PC-9 (cell line): ENCODE measurements at regions of chr7 and their contacts with region 1.

Region 1: DNA sequence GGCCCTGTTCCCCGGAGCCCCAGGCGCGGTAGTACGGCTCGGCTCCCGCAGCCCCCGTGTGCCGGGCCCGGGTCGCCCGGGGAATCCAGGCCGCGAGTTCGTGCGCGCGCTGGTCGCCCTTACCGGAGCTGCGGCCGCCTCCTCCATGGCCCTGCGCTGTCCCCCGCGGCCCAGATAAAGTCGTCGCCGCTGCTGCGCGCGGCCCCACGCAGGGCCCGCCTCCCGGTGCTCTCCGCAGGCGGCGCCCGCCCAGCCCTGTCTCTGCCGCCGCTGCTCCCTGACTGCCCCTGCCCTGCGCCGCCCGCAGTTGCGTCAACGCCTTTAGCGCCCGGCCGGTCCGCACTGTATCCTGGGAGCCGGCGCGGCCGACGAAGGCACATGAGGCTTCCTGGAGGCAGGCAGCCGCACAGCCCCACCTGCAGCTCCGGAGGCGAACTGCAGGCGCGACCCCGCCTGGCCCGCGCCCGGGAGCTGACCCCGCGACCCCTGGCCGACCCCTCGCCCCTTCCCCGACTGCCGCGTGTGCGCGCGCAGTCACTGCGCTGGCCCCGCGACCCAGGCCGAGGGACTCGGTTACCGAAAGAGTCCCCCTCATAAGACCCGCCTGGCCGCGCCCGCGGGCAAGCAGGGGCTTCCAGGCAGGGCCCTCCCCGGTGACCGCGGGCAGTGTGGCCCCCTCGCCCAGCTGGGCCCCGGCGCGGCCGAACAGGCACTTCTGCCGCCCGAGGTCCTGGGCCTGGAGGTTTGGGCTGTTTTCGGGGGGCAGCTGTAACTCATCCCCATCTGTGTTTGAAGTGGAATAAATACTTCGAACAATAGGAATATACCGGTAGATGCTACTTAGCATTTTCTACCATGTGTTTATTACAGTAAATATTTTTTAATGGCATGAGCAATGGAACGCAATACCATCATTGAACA is 127.1 kb upstream of the ZNF746 start:
- DNase-seq: peak; percentile 85 to 96
- H3K4me3 ChIP-seq: peak overlapping the region; percentile 89
- H3K27ac ChIP-seq: 0 out of 2 replicates have a peak overlapping the region, but pooled peaks have one; percentile 33
- H3K4me1 ChIP-seq: peaks cover 21% of the 10 kb centered on the region
- H3K27me3 ChIP-seq: peaks cover 11% of the 10 kb centered on the region
- CTCF ChIP-seq: peak; percentile 91

Region 2: DNA sequence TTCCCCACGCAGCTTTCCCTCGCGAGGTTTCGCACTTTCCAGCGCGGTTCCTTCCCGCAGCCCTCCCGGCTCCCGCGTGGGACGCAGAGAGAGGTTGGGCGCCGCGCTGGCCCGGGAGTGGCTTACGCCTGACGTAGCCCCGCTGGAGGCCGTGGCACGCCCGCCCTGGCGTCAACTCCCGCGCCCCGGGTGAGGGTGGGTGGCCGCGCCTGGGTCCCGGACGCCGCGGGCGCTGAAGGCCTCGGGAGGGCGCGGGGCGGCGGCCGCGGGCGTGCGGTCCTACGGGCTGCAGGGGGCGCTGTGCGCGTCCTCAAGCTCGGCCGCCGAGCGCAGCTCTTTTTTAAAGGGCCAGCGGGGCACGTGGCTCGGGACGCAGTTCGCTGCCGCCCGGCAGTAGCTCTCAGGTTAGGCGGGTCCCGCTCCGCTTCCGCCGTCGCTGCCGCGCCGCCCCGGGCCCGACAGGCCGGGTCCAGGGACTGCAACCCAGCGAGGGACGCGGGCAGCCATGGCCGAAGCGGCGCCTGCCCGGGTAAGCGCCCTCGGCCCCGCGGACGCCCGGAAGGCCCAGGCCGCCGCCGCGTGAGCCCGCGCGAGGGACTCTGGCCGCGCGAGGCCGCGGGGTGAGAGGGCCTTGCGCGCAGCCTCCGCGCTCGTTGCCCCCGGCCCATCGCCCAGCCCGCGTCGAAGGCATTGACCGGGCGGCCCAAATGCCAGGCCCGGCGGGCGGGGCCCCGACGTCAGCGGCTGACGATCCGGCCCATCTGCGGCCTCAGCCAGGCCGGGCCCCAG is 362.7 kb before region 1 on chr7 and contains the start of gene ZNF783:
- CTCF ChIA-PET with region 1: no interaction called
- POLR2A ChIA-PET with region 1: interaction called, 3 read pairs
- intact Hi-C with region 1: loop called (anchors 1 kb)
- DNase-seq: peak; percentile 74 to 90
- H3K4me3 ChIP-seq: peak within 1 kb of the TSS; percentile 89
- H3K27ac ChIP-seq: peak within 1 kb of the TSS; percentile 74
- H3K4me1 ChIP-seq: peaks cover 16% of the 10 kb centered on the region; the same call in 1 of the 2 replicates
- H3K27me3 ChIP-seq: no peaks in the 10 kb centered on the region
- CTCF ChIP-seq: peak; percentile 68
- total RNA-seq, gene ZNF783: 15.8 and 22.2 TPM in 2 replicates

Region 3: DNA sequence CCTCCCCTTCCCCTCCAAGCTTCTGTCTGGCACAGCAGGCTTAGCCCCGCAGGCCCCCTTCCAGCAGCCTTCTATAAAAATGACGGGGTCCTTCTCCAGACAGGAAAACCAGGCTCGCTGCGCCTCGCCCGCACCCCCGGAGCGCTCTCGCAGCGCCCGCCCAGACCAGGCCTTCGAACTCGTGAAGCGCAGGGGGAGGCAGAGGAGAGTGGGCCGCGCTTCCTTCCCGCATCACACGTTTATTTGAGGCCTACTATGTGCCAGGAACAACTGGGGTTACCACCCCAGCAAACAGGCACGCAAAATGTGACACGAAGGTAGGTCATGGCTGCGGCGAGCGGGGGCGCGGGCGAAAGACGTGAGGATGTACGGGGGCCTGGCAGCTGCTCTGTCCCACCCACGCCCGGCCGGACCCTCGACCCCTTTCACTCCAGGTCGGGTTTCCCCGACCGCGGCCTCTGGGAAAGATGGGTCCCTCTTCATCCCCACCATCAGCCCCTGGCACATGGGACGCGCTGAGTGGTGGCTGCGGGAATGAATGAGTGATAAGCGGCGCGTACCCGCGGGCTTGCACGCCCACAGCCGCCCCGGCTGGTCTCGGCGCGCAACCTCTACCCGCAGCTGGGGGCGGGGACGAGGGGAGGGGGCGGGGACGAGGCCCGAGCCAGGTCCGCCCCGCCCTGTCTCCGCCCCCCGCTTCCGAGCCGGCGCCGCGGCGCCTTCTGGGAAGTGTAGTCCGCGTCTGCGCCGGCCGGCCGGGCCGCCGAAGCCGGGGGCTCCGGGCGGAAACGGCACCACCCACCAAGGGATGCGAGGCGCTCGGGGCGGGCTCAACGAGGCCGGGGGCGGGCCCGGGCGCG is 89.6 kb after region 1 on chr7:
- CTCF ChIA-PET with region 1: no interaction called
- POLR2A ChIA-PET with region 1: no interaction called
- intact Hi-C with region 1: loop called (anchors 10 kb)
- DNase-seq: peak; percentile 68 to 86
- H3K4me3 ChIP-seq: peak overlapping the region; percentile 76
- H3K27ac ChIP-seq: no peak overlapping the region
- H3K4me1 ChIP-seq: peaks cover 9% of the 10 kb centered on the region
- H3K27me3 ChIP-seq: no peaks in the 10 kb centered on the region
- CTCF ChIP-seq: no peak

Region 4: DNA sequence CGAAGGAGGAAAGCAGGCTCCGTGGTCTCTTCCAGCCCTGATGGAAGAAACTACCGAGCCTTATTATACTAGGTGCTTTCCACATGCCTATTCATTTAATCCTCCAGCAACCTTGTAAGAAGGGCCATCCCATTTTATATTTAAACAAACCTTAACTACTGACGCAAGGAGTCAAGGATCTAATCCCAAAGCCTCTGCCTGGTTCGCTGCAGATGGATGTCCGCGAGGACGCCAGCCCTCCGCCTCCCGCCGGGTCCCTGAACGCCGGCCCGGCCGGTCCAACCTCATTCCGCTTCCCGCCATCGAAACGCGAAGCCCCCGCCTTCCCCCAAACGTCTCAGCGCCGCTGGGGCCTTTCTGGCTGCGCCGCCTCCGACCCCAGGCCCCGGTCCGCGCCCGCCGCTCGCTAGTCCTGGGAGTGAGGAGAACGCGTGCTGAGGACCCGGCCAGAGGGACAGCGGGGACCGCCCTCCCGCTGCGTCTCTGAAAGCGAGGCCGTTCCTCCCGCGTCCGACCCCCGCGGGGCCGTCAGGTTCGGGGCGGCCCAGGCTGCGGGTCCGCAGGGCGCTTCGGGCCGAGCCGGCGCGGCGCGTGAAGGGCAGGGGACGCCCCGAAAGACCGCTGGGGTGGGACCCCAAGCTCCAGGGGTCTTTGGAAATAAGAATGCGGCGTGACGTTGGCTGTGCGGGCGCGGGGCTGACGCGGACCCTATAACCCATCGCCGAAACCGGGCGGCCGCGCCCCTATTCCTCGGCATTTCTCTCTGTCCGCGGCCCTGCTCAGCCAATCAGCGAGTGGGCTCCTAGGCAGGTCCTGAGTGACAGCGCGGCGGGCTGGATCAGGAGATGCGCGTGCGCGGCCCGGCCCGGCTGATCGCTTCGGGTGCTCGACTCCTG is 248.6 kb after region 1 on chr7 and contains the start of gene ATP6V0E2:
- CTCF ChIA-PET with region 1: no interaction called
- POLR2A ChIA-PET with region 1: no interaction called
- intact Hi-C with region 1: loop called (anchors 10 kb)
- DNase-seq: peak; percentile 88 to 97
- H3K4me3 ChIP-seq: peak within 1 kb of the TSS; percentile 75
- H3K27ac ChIP-seq: no peak within 1 kb of the TSS
- H3K4me1 ChIP-seq: peaks cover 5% of the 10 kb centered on the region; the same call in 1 of the 2 replicates
- H3K27me3 ChIP-seq: no peaks in the 10 kb centered on the region
- CTCF ChIP-seq: no peak
- total RNA-seq, gene ATP6V0E2: 35.6 and 40.7 TPM in 2 replicates